Calu3 (cell line): ENCODE measurements at regions of chr7 and their contacts with region 1.

Region 1: GRCh38 chr7:41696314-41696916 is 6.5 kb downstream of the INHBA start:
- DNase-seq: peak; percentile 86
- H3K4me3 Mint-ChIP-seq: peak overlapping the region; percentile 87
- H3K27ac Mint-ChIP-seq: peak overlapping the region; percentile 66
- H3K4me1 Mint-ChIP-seq: peaks cover 63% of the 10 kb centered on the region
- H3K27me3 Mint-ChIP-seq: no peaks in the 10 kb centered on the region
- CTCF ChIP-seq: peak; percentile 96

Region 2: GRCh38 chr7:40833888-40834234 is 862.6 kb before region 1 on chr7:
- CTCF ChIA-PET with region 1: no interaction called
- intact Hi-C with region 1: loop called (anchors 5 kb)
- DNase-seq: peak; percentile 24
- H3K4me3 Mint-ChIP-seq: no peak overlapping the region
- H3K27ac Mint-ChIP-seq: no peak overlapping the region
- H3K4me1 Mint-ChIP-seq: peaks cover 6% of the 10 kb centered on the region
- H3K27me3 Mint-ChIP-seq: no peaks in the 10 kb centered on the region
- CTCF ChIP-seq: no peak

Region 3: DNA sequence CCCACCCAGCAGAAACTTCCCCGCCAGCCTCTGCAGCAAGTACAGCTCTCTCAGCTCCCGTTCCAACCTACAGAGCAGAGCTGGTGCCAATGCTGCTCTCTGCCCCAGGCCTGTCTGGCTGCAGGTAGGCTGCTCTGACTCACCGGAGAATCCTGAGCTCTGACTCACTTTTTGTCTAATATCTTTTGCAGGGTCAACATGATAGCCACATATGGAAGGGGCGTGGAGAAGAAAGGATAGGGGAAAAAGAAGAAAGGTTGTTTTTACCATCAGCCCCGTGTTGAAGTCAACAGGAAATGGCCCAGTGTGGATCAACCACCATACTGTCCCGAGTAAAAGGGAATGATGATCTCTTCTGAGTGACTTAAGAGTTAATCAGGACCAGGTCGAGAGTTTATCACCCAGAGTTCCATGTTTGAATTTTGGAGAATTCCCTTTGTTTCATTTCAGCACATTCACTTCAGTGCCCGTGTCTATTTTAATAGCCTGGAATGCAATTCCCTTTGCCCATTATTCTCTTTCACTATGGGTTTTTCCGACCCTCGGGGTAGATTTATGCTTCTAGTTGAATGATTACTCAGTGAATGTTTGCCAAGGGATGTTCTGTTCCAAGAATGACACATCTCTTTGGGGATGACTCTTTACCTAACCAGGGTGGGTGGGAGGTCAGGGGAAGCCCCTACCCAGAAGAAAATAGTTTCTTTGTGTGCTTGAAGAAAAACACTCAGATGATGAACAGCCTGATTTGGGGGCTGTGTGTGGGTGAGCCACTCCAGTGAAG is 588.6 kb before region 1 on chr7:
- CTCF ChIA-PET with region 1: interaction called, 5 read pairs
- intact Hi-C with region 1: loop called (anchors 2 kb)
- DNase-seq: peak; percentile 91
- H3K4me3 Mint-ChIP-seq: peak overlapping the region; percentile 53
- H3K27ac Mint-ChIP-seq: peak overlapping the region; percentile 96
- H3K4me1 Mint-ChIP-seq: peaks cover 70% of the 10 kb centered on the region
- H3K27me3 Mint-ChIP-seq: no peaks in the 10 kb centered on the region
- CTCF ChIP-seq: no peak

Region 4: GRCh38 chr7:41247143-41247865 is 449.1 kb before region 1 on chr7:
- CTCF ChIA-PET with region 1: no interaction called
- intact Hi-C with region 1: loop called (anchors 2 kb)
- DNase-seq: peak; percentile 69
- H3K4me3 Mint-ChIP-seq: peak overlapping the region; percentile 22
- H3K27ac Mint-ChIP-seq: peak overlapping the region; percentile 96
- H3K4me1 Mint-ChIP-seq: peaks cover 42% of the 10 kb centered on the region
- H3K27me3 Mint-ChIP-seq: no peaks in the 10 kb centered on the region
- CTCF ChIP-seq: no peak

Region 5: DNA sequence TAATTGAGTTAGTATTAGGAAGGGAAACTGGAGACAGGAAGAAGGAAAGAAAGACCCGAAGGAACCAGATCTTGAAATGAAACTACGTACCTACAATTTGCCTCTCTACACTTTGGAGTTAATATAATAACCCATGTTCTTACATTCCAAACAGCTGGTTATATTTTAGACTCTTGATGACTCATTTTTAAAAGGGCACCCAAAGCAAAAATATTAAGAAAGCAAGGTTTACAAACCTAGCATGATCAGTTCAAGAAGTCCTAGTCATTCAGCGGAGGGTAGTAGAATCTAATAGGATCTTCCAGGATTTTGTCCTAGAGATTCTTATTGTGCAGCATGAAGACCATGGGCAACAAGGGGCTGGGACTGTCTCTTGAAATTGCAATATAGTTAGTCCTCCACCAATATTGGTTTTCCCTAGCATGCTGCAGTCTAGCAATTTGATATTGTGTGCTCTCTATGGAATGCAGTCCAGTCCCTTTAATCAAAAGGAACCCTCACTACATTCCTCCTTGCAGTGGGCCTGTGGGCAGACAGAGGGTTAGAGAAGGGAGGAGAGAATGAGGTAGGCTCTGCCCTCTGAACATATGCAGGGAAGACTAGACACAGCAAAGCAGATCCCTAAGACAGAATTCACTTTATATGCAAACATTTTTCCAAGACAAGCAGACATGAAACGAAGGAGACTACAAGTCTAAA is 223.8 kb before region 1 on chr7:
- CTCF ChIA-PET with region 1: no interaction called
- intact Hi-C with region 1: loop called (anchors 10 kb)
- DNase-seq: no peak
- H3K4me3 Mint-ChIP-seq: no peak overlapping the region
- H3K27ac Mint-ChIP-seq: peak overlapping the region; percentile 2
- H3K4me1 Mint-ChIP-seq: peaks cover 20% of the 10 kb centered on the region
- H3K27me3 Mint-ChIP-seq: no peaks in the 10 kb centered on the region
- CTCF ChIP-seq: no peak

Region 6: GRCh38 chr7:41579961-41580940 is 116.2 kb before region 1 on chr7:
- CTCF ChIA-PET with region 1: no interaction called
- intact Hi-C with region 1: loop called (anchors 10 kb)
- DNase-seq: no peak
- H3K4me3 Mint-ChIP-seq: no peak overlapping the region
- H3K27ac Mint-ChIP-seq: no peak overlapping the region
- H3K4me1 Mint-ChIP-seq: no peaks in the 10 kb centered on the region
- H3K27me3 Mint-ChIP-seq: no peaks in the 10 kb centered on the region
- CTCF ChIP-seq: no peak

Region 7: DNA sequence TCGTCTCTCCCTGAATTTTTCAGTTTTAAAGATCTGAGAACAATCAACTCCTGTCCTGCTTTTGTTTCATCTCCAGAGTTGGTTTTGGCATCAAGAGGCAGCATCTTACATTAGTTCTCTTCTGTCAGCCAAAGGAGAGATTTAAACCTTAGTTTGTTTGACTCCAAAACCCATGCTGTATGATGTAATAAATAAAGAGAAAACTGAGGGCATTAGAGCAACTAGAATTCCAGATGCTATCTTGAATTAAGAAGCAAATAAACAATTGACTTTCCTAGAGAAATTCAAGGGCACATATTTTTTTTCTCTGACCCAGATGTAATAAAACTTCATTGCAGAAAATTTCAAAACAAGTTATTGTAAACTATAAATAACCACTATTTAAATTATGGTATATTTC is 47.9 kb before region 1 on chr7:
- CTCF ChIA-PET with region 1: no interaction called
- intact Hi-C with region 1: no loop called
- DNase-seq: no peak
- H3K4me3 Mint-ChIP-seq: no peak overlapping the region
- H3K27ac Mint-ChIP-seq: no peak overlapping the region
- H3K4me1 Mint-ChIP-seq: no peaks in the 10 kb centered on the region
- H3K27me3 Mint-ChIP-seq: no peaks in the 10 kb centered on the region
- CTCF ChIP-seq: no peak